Colonic mucosa (tissue), 4 donors: ENCODE measurements at regions of chr6 and their contacts with region 1.

Region 1: DNA sequence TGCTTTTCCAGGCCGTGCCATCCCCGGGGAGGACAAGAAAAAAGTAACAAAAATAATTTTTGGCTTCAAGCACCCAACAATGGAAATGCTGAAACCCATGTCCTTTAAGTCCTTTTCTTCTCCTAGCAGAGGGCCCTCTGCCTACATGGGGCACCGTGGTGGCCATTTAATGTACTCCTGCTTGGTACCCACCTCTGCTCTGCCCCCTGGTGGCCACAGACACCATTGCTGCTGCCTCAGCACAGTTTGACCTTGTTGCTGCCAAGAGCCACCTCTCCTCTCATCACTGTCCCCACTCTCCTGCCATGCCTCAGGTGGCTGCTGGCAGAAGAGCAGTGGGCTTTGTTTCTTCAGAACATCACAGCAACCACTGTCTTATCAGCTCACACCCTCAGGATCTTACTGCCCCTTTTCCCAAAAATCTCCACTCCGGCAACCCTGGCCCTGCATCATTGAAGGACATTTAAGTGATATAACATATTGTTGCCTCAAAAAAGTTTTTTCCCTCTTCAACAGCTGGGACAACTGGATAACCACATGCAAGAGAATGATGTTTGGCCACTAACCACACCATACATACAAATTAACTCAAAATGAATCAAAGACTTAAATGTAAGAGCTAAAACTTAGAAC is 12.9 kb upstream of the ARMC2 start:
- DNase-seq: peak; percentile 88
- H3K4me3 ChIP-seq: no peak overlapping the region
- H3K27ac ChIP-seq: no peak overlapping the region
- H3K4me1 ChIP-seq: no peaks in the 10 kb centered on the region
- H3K27me3 ChIP-seq: no peaks in the 10 kb centered on the region
- CTCF ChIP-seq: peak; percentile 99

Region 2: DNA sequence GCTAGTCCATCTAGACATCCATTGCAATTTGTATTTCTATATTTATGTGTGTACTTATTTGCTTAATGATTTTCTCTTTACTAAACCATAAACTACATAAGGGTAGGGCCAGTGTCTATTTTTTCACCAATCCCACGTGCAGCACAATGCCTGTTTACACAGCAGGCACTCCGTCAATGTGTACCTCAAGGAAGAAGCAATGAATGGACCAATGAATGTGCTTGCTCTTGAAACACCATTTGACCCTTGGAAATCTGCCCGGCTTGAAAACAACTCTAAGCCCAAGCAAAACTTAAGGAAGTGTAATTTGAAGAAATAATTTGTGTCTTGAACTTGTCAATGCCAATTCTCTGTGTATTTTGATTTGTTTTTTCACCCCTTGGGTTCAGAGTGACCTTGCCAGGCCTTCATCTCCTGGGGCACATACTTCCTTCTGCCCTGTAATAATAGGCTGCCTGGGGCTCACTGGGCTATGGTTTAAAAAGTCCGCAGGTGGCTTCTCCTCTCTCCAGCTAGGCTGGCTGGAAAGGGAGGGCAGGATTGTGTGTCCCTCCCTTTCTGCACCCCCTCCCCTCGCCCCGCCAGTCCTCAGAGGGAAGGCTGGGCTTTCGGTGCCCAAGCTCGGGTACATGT is 127.9 kb before region 1 on chr6:
- intact Hi-C with region 1: no loop called
- DNase-seq: peak; percentile 38
- H3K4me3 ChIP-seq: no peak overlapping the region
- H3K27ac ChIP-seq: no peak overlapping the region
- H3K4me1 ChIP-seq: no peaks in the 10 kb centered on the region
- H3K27me3 ChIP-seq: no peaks in the 10 kb centered on the region
- CTCF ChIP-seq: no peak

Region 3: GRCh38 chr6:108782179-108783041 is 52.9 kb before region 1 on chr6:
- intact Hi-C with region 1: loop called (anchors 5 kb)
- DNase-seq: peak; percentile 90
- H3K4me3 ChIP-seq: peak overlapping the region; percentile 17
- H3K27ac ChIP-seq: no peak overlapping the region
- H3K4me1 ChIP-seq: no peaks in the 10 kb centered on the region
- H3K27me3 ChIP-seq: no peaks in the 10 kb centered on the region
- CTCF ChIP-seq: peak; percentile 77

Region 4: GRCh38 chr6:108896111-108896661 is 60.9 kb after region 1 on chr6:
- intact Hi-C with region 1: loop called (anchors 5 kb)
- DNase-seq: no peak
- H3K4me3 ChIP-seq: no peak overlapping the region
- H3K27ac ChIP-seq: no peak overlapping the region
- H3K4me1 ChIP-seq: peaks cover 2% of the 10 kb centered on the region
- H3K27me3 ChIP-seq: no peaks in the 10 kb centered on the region
- CTCF ChIP-seq: no peak

Region 5: GRCh38 chr6:109073344-109074132 is 238.2 kb after region 1 on chr6:
- intact Hi-C with region 1: loop called (anchors 10 kb)
- DNase-seq: peak; percentile 58
- H3K4me3 ChIP-seq: no peak overlapping the region
- H3K27ac ChIP-seq: no peak overlapping the region
- H3K4me1 ChIP-seq: no peaks in the 10 kb centered on the region
- H3K27me3 ChIP-seq: no peaks in the 10 kb centered on the region
- CTCF ChIP-seq: peak; percentile 54